CD4-positive, alpha-beta memory T cell (primary cell): ENCODE measurements at regions of chr10 and their contacts with region 1.

Region 1: DNA sequence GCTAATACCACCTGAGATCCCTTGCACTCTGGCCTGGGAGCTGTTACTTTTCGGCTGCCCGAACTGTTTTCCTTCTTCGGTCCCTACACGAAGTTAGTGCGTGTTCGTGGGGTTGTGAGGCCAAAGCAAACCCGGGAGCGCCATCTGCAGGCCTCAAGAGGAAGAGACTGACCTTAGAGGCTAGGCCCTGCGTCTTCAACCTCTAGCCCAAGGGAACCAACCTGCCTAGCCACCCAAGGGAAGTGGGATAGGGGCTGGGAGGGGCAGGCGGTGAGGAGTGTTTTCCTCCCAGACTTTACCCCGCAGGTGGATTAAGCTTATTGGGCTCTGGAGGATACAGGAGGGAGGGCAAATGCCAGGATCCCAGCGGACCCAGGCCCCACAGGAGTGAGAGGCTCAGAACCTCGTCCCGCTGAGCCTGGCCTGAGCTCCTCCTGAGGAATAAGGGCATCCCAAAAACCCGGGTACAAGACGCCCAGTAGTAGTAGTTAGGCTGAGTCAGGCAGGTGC is 1.7 kb upstream of the PAX2 start:
- DNase-seq: peak in 4 of 5 donors; percentile 33 to 46 (median 45)
- H3K4me3 ChIP-seq: no peak overlapping the region
- H3K4me3 Mint-ChIP-seq: peak overlapping the region in 5 of 8 donors; percentile 29 to 84 (median 54)
- H3K27ac ChIP-seq: no peak overlapping the region
- H3K27ac Mint-ChIP-seq: peak overlapping the region in 1 of 7 donors; percentile 70
- H3K4me1 ChIP-seq: peaks cover 28% of the 10 kb centered on the region
- H3K4me1 Mint-ChIP-seq: peaks cover 14 to 67% (median 38%) of the 10 kb centered on the region in 4 donors
- H3K27me3 ChIP-seq: peaks cover 60% of the 10 kb centered on the region
- H3K27me3 Mint-ChIP-seq: peaks cover 55 to 60% of the 10 kb centered on the region in 2 donors

Region 2: DNA sequence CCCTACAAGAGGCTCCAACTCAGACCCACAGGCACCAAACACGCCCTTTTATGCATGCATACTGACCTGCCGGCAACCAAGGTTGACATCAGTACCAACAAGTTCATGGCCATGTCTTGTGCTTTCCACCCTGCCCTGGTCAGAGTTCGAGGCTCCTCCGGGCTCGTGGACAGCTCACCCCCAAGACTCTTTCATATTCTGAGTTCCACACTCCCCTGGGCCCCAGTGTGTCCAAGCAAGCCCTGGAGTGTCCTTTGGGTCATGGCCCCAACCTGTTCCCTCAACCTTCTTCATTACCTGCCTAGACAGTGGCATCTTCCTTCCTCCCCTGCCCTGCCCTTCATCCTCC is 167.4 kb before region 1 on chr10:
- CTCF ChIA-PET with region 1: no interaction called
- POLR2A ChIA-PET with region 1: no interaction called
- intact Hi-C with region 1: no loop called
- DNase-seq: no peak
- H3K4me3 ChIP-seq: no peak overlapping the region
- H3K4me3 Mint-ChIP-seq: no peak overlapping the region
- H3K27ac ChIP-seq: no peak overlapping the region
- H3K27ac Mint-ChIP-seq: no peak overlapping the region
- H3K4me1 ChIP-seq: no peaks in the 10 kb centered on the region
- H3K4me1 Mint-ChIP-seq: no peaks in the 10 kb centered on the region
- H3K27me3 ChIP-seq: no peaks in the 10 kb centered on the region
- H3K27me3 Mint-ChIP-seq: peaks cover 16 to 32% of the 10 kb centered on the region in 2 donors

Region 3: DNA sequence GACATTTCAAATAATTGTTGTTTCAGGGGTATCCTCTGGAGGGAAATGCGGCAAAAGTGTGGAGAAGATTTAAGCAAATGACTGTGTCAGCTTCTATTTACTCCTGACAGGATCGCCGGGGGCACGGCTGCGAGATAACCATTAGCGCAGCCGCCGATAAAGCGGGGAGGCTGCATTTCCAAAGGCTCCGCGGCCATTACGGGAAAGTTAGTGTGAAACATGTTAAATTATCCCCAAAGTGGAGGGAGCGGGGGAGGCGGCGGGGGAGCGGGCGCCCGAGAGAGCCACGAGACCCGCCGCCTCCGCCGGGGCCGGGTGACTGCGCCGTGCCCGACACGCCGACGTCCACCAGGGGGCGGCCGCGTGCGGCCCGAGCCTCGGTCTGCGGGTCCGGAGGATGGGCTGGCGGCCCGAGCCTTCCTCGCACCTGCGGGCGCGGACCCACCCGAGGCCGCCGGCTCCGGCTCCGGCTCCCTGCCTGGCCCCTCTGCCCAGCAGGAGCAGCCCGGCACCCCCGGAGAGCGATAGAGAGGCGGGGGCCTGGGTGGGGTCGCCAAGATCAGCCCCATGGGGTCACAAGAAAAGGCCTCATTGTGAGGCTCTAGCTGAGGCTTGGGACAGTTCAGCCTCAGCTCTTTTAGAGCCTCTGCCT is 72.7 kb before region 1 on chr10:
- CTCF ChIA-PET with region 1: interaction called, 4 read pairs
- POLR2A ChIA-PET with region 1: no interaction called
- intact Hi-C with region 1: loop called (anchors 2 kb)
- DNase-seq: peak in 4 of 5 donors; percentile 45 to 57 (median 50)
- H3K4me3 ChIP-seq: no peak overlapping the region
- H3K4me3 Mint-ChIP-seq: peak overlapping the region in 6 of 8 donors; percentile 34 to 78 (median 56)
- H3K27ac ChIP-seq: no peak overlapping the region
- H3K27ac Mint-ChIP-seq: no peak overlapping the region
- H3K4me1 ChIP-seq: peaks cover 5% of the 10 kb centered on the region
- H3K4me1 Mint-ChIP-seq: peaks cover 1 to 9% (median 6%) of the 10 kb centered on the region in 4 donors
- H3K27me3 ChIP-seq: peaks cover 33% of the 10 kb centered on the region
- H3K27me3 Mint-ChIP-seq: peaks cover 50 to 54% of the 10 kb centered on the region in 2 donors

Region 4: DNA sequence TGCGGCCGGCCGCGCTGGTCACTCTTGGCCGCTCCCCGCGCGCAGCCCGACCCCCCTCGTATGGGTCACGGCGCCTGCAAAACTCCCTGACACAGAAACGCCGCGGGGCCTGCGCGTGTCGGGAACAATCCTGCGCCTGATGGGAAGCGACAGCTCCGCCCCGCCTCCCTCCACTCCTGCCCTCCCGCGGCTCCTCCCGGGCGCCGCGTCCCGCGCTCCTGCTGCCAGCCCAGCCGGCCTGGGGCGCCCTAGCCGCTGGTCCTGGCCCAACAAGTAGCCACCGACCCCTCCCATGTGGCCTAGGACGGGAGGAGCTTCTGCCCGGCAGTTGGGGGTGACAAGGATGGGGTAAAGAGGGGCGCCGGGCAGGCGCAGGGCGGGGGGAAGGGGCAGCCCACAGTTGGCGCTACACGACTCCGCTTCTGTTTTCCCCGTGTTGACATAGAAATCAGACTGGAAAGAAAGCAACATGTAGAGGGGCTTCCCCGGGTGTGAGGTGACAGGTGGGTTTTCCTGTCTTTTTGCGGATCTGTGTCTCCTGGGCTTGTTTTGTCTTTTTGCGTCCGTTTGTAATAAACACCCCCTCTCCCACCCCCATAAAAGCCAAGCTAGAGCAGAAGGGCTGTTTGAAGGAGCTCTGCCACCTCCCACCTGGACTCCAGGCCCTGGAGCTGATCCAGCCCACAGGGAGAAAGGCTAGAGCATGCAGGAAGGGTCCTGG is 33.4 kb before region 1 on chr10:
- CTCF ChIA-PET with region 1: no interaction called
- POLR2A ChIA-PET with region 1: no interaction called
- intact Hi-C with region 1: no loop called
- DNase-seq: no peak
- H3K4me3 ChIP-seq: no peak overlapping the region
- H3K4me3 Mint-ChIP-seq: no peak overlapping the region
- H3K27ac ChIP-seq: no peak overlapping the region
- H3K27ac Mint-ChIP-seq: no peak overlapping the region
- H3K4me1 ChIP-seq: peaks cover under 1% of the 10 kb centered on the region
- H3K4me1 Mint-ChIP-seq: peaks cover 2 to 16% (median 8%) of the 10 kb centered on the region in 4 donors
- H3K27me3 ChIP-seq: peaks cover 47% of the 10 kb centered on the region
- H3K27me3 Mint-ChIP-seq: peaks cover 56 to 71% of the 10 kb centered on the region in 2 donors

Region 5: DNA sequence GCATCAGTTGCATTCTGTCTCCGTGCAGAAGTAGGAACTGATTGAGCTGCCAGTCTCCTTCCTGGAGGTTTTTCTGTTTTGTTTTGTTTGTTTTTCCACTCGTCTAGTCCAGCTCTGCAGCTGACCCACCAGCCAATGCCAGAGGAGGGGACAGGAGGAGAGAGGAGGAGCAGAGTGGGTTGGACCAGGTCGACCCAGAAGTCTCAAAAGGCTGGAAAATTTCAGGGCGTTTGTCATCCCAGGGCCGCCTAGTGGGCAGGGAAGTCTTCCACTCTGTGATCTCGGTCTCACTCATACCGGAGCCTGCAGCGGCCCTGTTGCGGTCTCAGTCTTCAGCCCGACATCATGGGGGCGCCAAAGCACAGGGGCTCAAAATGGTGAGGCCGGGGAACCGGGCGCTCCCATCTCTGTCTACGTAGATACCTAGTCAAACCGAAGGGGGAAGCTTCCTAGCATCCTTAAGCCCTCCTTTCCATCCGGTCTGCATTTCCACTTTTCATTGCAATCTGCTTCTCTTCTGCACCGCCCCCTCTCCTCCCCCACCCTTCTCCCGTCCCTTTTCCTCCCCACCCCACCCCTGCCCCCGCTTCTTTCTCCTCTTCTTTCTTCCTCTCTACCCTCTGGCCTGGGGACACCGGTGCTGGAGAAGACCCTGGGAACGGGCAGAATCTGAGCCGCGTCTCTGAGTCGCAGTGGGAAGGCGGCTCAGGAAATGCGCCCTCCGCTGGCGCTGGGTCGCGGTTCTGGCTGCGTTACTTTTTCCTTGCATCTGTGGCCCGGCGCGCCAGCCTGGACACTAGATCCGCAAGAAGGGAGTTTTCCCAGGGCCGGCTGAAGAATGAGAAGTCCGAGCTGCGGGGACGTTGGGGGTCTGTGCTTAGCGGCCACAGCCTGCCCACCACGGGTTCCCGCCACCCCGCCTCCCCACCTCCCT is 14.5 kb before region 1 on chr10:
- CTCF ChIA-PET with region 1: interaction called, 10 read pairs
- POLR2A ChIA-PET with region 1: no interaction called
- intact Hi-C with region 1: no loop called
- DNase-seq: no peak
- H3K4me3 ChIP-seq: no peak overlapping the region
- H3K4me3 Mint-ChIP-seq: peak overlapping the region; percentile 8 to 76 (median 65)
- H3K27ac ChIP-seq: no peak overlapping the region
- H3K27ac Mint-ChIP-seq: no peak overlapping the region
- H3K4me1 ChIP-seq: peaks cover 24% of the 10 kb centered on the region
- H3K4me1 Mint-ChIP-seq: peaks cover 12 to 41% (median 26%) of the 10 kb centered on the region in 4 donors
- H3K27me3 ChIP-seq: peaks cover 52% of the 10 kb centered on the region
- H3K27me3 Mint-ChIP-seq: peaks cover 64 to 72% of the 10 kb centered on the region in 2 donors